Activated T-helper 2 cell treated with anti-CD3 and anti-CD28 coated beads, Interferon-gamma antibody, Interleukin-2, Interleukin-4, amounts not matched to agents 10 μg/mL and 5 μg/mL and 100 μg/mL, durations not matched to agents 14 hours and 24 hours and 36 hours (primary cell): ENCODE measurements at regions of chr7 and their contacts with region 1.

Region 1: GRCh38 chr7:7968543-7969305 is at the start of gene GLCCI1:
- DNase-seq: peak; percentile 97
- H3K4me3 Mint-ChIP-seq: peak within 1 kb of the TSS; percentile 94
- H3K27ac Mint-ChIP-seq: peak within 1 kb of the TSS; percentile 95
- H3K4me1 Mint-ChIP-seq: peaks cover 24% of the 10 kb centered on the region
- H3K27me3 Mint-ChIP-seq: no peaks in the 10 kb centered on the region
- total RNA-seq, gene GLCCI1: 23.8 and 27.9 TPM in 2 replicates

Region 2: DNA sequence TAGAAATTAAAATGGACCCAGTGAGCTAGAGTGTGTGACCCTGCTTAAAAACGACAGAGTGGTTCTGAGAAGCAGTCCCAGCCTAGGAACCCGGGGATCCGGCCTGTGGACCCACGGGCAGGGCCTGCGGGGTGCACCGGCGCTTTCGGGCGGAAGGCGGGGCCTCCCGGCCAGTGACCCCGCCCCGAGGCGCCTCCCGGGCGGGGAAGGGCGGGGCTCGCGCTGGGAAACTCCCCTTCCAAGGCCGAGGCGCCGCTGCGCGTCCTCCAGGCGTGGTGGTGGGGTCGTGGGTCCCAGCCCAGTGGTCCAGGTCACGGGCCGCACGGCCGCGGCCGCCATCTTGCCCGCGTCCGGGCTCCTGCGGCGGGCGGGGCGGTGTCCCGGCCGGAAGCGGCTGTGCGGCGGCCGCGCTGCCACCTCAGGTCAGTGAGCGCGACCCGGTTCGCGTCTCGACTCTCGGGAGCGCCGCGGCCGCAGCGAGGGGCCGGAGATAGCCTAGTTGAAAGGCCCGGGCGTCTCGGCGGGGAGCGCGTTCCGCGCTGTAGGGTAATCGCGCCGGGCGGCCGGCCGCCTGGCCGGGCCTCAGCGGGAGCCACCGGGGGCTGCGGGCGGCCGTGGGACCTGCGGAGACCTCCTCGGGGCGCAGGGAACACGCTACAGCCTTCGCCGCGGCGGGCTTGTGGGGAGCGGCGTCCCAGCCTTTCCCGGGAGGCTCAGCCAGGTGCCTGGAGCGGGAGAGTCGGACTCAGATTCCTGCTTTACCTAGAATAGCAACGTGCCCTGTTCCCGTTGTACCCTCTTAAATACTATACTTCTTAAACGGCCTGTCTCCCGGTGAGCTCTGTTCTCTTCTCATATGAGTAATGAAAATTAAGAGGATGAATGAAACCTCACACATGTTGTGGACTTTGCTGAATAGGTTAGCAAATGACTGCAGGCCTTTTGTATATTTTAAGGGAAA is 401.8 kb before region 1 on chr7 and contains the start of gene MIOS:
- intact Hi-C with region 1: loop called (anchors 5 kb)
- DNase-seq: peak; percentile 76
- H3K4me3 Mint-ChIP-seq: peak within 1 kb of the TSS; percentile 76
- H3K27ac Mint-ChIP-seq: peak within 1 kb of the TSS; percentile 61
- H3K4me1 Mint-ChIP-seq: peaks cover 27% of the 10 kb centered on the region
- H3K27me3 Mint-ChIP-seq: peaks cover 9% of the 10 kb centered on the region
- total RNA-seq, gene MIOS: 29.8 and 30.3 TPM in 2 replicates

Region 3: GRCh38 chr7:7719236-7719635 is 249.5 kb before region 1 on chr7:
- intact Hi-C with region 1: loop called (anchors 5 kb)
- DNase-seq: peak; percentile 45
- H3K4me3 Mint-ChIP-seq: no peak overlapping the region
- H3K27ac Mint-ChIP-seq: peak overlapping the region; percentile 47
- H3K4me1 Mint-ChIP-seq: peaks cover 23% of the 10 kb centered on the region
- H3K27me3 Mint-ChIP-seq: no peaks in the 10 kb centered on the region

Region 4: GRCh38 chr7:7920481-7920880 is 48.2 kb before region 1 on chr7:
- intact Hi-C with region 1: loop called (anchors 5 kb)
- DNase-seq: no peak
- H3K4me3 Mint-ChIP-seq: no peak overlapping the region
- H3K27ac Mint-ChIP-seq: no peak overlapping the region
- H3K4me1 Mint-ChIP-seq: peaks cover 36% of the 10 kb centered on the region
- H3K27me3 Mint-ChIP-seq: no peaks in the 10 kb centered on the region

Region 5: DNA sequence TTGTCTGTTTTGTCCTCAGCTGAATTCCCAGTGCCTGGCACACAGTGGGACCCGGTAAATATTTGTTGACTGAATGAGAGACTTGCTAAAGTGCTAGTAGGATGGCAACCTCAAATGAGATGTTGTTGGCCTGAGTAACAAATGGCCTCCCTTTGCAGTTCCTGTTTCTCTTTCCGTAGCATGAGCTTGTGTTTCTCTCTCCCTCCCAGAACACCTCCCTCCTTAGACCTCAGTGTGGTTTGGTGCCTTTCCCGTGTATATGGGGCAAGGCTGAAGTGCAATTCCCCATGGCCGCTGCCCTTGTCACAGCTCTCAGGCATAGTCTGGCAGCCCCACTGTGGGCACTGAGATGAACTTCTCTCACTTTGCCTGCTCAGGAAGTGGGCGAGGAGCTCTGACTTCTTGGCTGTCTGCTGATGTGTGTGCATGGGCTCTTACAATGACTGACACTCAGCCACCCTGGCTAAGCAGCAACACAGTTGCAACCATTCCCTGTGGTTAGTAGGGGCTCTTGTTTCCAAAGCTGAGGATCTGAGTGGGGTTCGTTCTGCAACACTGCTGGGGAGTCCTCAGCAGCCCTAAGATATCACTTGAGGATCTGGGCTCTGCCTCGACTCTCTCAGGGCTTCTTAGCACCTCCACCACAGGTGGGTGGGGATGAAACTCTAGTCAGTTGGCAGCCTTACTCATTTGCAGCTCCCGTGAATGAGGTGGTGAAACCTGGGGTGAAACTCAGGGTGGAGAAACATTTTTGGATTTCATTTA is 157.1 kb after region 1 on chr7:
- intact Hi-C with region 1: loop called (anchors 1 kb)
- DNase-seq: peak; percentile 72
- H3K4me3 Mint-ChIP-seq: peak overlapping the region; percentile 64
- H3K27ac Mint-ChIP-seq: peak overlapping the region; percentile 98
- H3K4me1 Mint-ChIP-seq: peaks cover 76% of the 10 kb centered on the region
- H3K27me3 Mint-ChIP-seq: no peaks in the 10 kb centered on the region

Region 6: GRCh38 chr7:8190119-8190895 is 221.6 kb after region 1 on chr7:
- intact Hi-C with region 1: loop called (anchors 2 kb)
- DNase-seq: peak; percentile 32
- H3K4me3 Mint-ChIP-seq: no peak overlapping the region
- H3K27ac Mint-ChIP-seq: no peak overlapping the region
- H3K4me1 Mint-ChIP-seq: peaks cover 45% of the 10 kb centered on the region
- H3K27me3 Mint-ChIP-seq: no peaks in the 10 kb centered on the region